Mammary epithelial cell (primary cell): ENCODE measurements at regions of chr1 and their contacts with region 1.

Region 1: GRCh38 chr1:15139654-15140350 is 13.7 kb upstream of the TMEM51 start:
- DNase-seq: peak; percentile 43
- H3K4me3 ChIP-seq: no peak overlapping the region
- H3K27ac ChIP-seq: no peak overlapping the region
- H3K4me1 ChIP-seq: peaks cover 11% of the 10 kb centered on the region
- H3K27me3 ChIP-seq: no peaks in the 10 kb centered on the region
- CTCF ChIP-seq: no peak

Region 2: DNA sequence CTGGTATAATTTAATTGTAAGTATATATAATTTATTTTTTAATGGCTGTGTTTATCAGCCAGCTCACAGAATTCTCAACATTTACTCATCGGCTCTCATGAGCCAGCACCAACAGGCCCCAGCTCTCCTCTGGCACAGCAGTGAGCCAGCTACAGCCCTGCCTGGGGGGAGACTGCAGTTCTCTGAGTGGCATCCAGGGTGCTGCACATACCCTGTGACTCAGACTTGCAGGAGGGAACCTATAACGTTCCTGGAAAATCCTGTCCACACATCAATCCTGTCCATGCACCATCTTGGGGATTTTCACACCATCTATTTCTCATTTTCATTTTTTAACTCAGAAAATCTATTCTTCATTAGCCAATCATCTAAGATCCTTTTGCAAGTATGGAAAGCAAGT is 143.7 kb after region 1 on chr1:
- CTCF ChIA-PET with region 1: interaction called, 3 read pairs
- dilution Hi-C with region 1: loop called (anchors 5 kb)
- in situ Hi-C with region 1: no loop called
- intact Hi-C with region 1: no loop called
- DNase-seq: peak; percentile 94
- H3K4me3 ChIP-seq: no peak overlapping the region
- H3K27ac ChIP-seq: peak overlapping the region; percentile 76
- H3K4me1 ChIP-seq: peaks cover 25% of the 10 kb centered on the region
- H3K27me3 ChIP-seq: no peaks in the 10 kb centered on the region
- CTCF ChIP-seq: peak; percentile 52 to 62